HEK293 (cell line): ENCODE measurements at regions of chr7 and their contacts with region 1.

Region 1: GRCh38 chr7:23261843-23262452 is 15.4 kb downstream of the GPNMB start:
- H3K4me3 ChIP-seq: no peak overlapping the region
- H3K27ac ChIP-seq: no peak overlapping the region
- H3K4me1 ChIP-seq: no peaks in the 10 kb centered on the region
- CTCF ChIP-seq: 0 out of 2 replicates have a peak, but pooled peaks have one; percentile 29

Region 2: GRCh38 chr7:22577396-22578001 is 684.4 kb before region 1 on chr7:
- CTCF ChIA-PET with region 1: no interaction called
- POLR2A ChIA-PET with region 1: no interaction called
- H3K4me3 ChIP-seq: no peak overlapping the region
- H3K27ac ChIP-seq: no peak overlapping the region
- H3K4me1 ChIP-seq: no peaks in the 10 kb centered on the region
- CTCF ChIP-seq: no peak

Region 3: DNA sequence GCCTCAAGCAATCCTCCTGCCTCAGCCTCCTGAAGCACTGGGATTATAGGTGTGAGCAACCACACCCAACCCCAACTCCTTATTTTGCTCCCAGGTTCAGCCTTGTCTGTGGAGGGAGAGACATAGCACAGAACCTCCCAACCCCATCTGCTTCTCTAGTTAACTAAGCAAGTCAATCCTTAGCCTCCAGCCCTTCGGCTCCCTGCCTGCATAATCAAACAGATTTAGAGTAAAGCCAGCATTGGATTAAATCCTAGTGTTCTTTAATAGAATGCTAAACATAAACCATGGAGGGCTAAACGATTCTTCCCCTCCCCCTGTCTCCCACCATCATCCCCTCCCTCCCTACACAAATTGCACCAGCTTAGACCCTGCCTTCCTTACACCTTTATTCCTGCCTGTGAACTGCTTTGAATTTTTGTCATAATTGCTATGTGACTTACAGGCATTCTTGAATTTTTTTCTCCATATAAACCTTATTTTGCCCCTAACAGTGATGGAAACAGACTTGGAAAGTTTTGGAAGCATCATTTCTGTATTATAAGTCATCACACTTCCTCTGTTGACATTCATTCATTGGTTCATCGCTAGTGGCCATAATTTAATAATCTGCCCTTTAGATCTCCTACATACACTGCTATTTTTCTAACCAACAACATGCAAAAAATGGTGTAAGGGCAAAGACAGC is 366.7 kb before region 1 on chr7:
- CTCF ChIA-PET with region 1: no interaction called
- POLR2A ChIA-PET with region 1: no interaction called
- H3K4me3 ChIP-seq: no peak overlapping the region
- H3K27ac ChIP-seq: no peak overlapping the region
- H3K4me1 ChIP-seq: no peaks in the 10 kb centered on the region
- CTCF ChIP-seq: no peak

Region 4: DNA sequence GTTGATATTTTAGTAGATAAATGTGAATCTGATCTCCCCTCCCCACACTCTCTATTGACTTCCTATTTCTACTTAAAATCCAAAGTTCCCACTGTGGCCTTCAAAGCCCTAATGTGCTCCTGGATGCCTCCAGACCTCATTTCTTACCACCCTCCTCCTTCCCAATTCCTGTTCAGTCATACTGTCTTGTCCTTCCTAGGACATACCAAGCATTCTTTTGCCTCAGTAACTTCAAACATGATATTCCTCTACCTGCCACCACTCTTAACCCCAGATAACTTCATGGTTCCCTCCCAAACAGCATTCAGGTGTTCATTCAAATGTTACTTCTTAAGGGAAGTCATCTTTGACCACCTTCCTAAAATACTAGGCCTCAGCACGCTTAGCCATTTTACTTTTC is 383.9 kb after region 1 on chr7:
- CTCF ChIA-PET with region 1: interaction called, 10 read pairs
- POLR2A ChIA-PET with region 1: no interaction called
- H3K4me3 ChIP-seq: no peak overlapping the region
- H3K27ac ChIP-seq: no peak overlapping the region
- H3K4me1 ChIP-seq: no peaks in the 10 kb centered on the region
- CTCF ChIP-seq: no peak